ENCODE measurements at regions of chr2 and their contacts with region 1.

Region 1: GRCh38 chr2:192029089-192029488 is 165.6 kb downstream of the TMEFF2 start:
- DNase-seq: no peak
- ATAC-seq: no peak
- H3K4me3 ChIP-seq: no peak overlapping the region
- H3K27ac ChIP-seq: no peak overlapping the region
- H3K4me1 ChIP-seq: peaks cover 0 to 23% (median 12%) of the 10 kb centered on the region in 12 donors
- H3K27me3 ChIP-seq: no peaks in the 10 kb centered on the region
- CTCF ChIP-seq: peak in 1 of 12 donors; percentile 3
- POLR2A ChIP-seq: no peak

Region 2: GRCh38 chr2:191150600-191151330 is 878.3 kb before region 1 on chr2 and contains the start of gene STAT4:
- intact Hi-C with region 1: no loop called
- DNase-seq: peak; percentile 36 to 69 (median 42)
- ATAC-seq: peak; percentile 49 to 81 (median 65)
- H3K4me3 ChIP-seq: peak within 1 kb of the TSS; percentile 19 to 70 (median 54)
- H3K27ac ChIP-seq: peak within 1 kb of the TSS in 4 of 12 donors; percentile 40 to 83 (median 58)
- H3K4me1 ChIP-seq: peaks cover 0 to 17% (median 2%) of the 10 kb centered on the region in 12 donors
- H3K27me3 ChIP-seq: no peaks in the 10 kb centered on the region
- CTCF ChIP-seq: no peak
- POLR2A ChIP-seq: no peak
- total RNA-seq, gene STAT4: 0.32 to 21.5 (median 3.1) TPM

Region 3: DNA sequence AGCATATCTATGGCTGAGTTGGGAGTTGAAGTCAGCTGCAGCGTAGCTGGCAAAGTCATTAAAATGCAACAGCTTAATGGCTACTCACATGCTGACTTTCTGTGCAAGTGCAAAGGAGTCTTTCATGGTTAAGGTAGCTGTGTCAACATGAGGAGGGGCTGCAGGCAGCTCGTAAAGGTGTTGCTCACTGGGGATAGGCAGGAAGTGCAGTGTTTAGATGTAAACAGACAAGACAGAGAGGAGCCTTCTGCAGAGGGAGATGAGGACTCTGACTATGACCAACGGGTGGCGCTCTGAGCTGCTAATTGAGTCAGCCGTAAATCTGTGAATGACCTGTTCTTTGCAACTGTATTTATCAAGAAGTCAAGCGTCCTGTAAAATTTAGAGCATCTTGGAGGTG is 159.9 kb before region 1 on chr2:
- intact Hi-C with region 1: loop called in 1 of 10 experiments (anchors 5 kb)
- DNase-seq: no peak
- ATAC-seq: no peak
- H3K4me3 ChIP-seq: no peak overlapping the region
- H3K27ac ChIP-seq: peak overlapping the region in 2 of 12 donors; percentile 38 to 69
- H3K4me1 ChIP-seq: peaks cover 12 to 51% (median 37%) of the 10 kb centered on the region in 12 donors
- H3K27me3 ChIP-seq: no peaks in the 10 kb centered on the region
- CTCF ChIP-seq: peak in 1 of 12 donors; percentile 23
- POLR2A ChIP-seq: no peak

Region 4: DNA sequence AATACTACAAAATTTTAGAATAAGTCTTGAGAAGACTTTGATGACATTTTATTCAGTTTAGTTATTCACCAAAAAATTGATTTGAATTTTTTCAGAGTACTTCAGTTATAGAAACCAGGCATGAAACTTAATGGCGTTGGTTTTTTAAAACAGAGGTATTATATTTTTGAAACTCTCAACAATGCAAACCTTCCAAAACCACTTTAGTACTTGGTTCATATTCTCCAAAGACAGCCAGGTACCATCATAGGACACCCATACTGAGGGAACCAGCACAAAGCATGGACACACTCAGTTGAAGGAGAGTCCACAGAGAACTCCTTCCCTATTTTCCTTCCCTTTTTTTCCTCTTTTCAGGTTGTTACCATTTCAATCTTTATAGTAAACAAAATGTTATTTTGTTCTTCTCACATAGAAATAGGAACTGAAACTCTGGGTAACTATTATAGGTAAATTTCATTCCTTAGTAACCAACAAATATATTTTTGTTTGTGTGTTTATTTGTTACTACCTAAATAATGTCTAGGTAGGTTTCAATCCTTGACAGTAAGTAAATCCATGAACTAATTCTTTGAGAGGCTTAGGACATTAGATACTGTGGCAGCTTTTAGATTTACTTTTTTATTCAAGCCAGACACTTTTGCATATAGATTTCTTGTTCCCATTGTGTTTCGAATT is 69.9 kb after region 1 on chr2:
- intact Hi-C with region 1: no loop called
- DNase-seq: no peak
- ATAC-seq: no peak
- H3K4me3 ChIP-seq: no peak overlapping the region
- H3K27ac ChIP-seq: no peak overlapping the region
- H3K4me1 ChIP-seq: no peaks in the 10 kb centered on the region
- H3K27me3 ChIP-seq: no peaks in the 10 kb centered on the region
- CTCF ChIP-seq: no peak
- POLR2A ChIP-seq: no peak

Region 5: DNA sequence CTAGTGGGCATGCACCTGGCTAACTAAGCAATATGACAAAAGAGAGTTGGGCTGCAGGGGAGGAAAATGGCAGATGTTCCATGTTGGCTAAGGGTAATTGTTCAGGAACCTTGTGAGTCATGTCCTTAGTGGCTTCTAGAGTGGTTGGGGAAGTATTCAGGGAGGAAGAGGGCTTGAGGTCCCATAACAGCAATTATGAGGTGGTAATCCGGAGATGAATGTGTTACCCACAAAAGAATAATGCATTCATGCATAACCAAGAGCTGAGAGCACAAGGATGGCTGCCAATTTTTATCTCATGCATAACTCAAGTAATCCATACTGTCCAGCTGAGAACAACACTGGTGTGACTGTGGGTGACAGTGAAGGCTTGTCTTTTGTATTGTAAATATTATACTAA is 122.8 kb after region 1 on chr2:
- intact Hi-C with region 1: loop called in 1 of 10 experiments (anchors 10 kb)
- DNase-seq: no peak
- ATAC-seq: no peak
- H3K4me3 ChIP-seq: no peak overlapping the region
- H3K27ac ChIP-seq: no peak overlapping the region
- H3K4me1 ChIP-seq: peaks cover 0 to 19% (median 3%) of the 10 kb centered on the region in 12 donors
- H3K27me3 ChIP-seq: no peaks in the 10 kb centered on the region
- CTCF ChIP-seq: no peak
- POLR2A ChIP-seq: no peak

Region 6: DNA sequence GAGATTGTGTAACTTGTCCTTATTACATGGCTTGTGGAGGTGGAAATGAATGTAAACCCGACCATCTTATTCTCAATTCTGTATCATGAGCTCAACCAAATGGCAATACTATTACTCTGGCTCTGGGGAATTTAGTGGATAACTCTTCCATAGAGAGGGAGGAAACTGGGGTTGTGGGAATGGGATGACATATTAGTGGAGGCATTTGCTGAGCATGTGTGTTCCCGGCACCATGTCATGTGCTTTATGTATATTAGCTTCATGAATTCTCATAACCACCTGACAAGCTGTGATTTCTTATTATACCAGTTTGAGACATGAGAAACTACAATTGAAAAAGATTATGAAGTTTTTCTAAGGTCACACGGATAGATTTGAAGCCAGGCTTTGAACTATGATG is 278.4 kb after region 1 on chr2:
- intact Hi-C with region 1: no loop called
- DNase-seq: no peak
- ATAC-seq: no peak
- H3K4me3 ChIP-seq: no peak overlapping the region
- H3K27ac ChIP-seq: no peak overlapping the region
- H3K4me1 ChIP-seq: no peaks in the 10 kb centered on the region
- H3K27me3 ChIP-seq: no peaks in the 10 kb centered on the region
- CTCF ChIP-seq: no peak
- POLR2A ChIP-seq: no peak

Measured in heart left ventricle (tissue), 16 donors.